PC-3 (cell line): ENCODE measurements at regions of chr2 and their contacts with region 1.

Region 1: DNA sequence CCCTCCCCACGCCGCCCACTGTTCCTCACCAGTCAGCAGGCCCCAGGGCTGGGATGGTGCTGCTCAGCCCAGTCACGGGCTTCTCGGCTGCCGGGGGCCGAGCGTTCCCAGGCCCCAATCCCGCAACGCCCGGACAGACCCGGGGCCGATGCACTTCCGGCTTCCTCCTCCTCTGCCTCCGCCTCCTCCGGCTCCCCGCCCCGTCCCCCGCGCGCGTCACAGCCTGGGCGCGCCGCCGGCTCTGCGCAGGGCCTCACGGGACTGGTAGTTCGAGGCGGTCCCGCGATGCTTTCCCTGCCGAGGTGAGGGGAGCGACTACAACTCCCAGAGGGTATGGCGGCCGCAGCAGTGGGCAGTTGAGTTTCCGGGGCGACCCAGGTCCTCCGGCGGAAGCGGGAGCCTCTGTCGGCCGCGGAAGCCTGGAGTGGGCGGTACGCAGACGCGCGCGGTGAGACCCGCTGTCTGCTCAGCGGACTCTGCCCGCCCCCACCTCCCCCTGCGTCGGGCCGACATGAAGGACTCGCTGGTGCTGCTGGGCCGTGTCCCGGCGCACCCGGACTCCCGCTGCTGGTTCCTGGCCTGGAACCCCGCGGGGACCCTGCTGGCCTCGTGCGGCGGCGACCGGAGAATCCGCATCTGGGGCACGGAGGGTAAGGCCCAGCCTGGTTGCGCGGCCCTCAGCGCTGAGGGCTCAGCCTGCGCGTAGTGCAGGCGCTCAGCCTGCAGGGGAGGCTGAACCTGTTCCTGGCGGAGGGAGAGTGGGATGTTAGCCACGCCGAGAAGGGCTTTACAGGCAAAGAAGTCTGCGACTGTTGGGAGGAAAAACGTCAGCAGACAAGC is at the starts of genes CIAO1 and TMEM127:
- DNase-seq: peak; percentile 98
- ATAC-seq: peak; percentile 94
- H3K4me3 ChIP-seq: peak within 1 kb of the TSS; percentile 100
- H3K27ac ChIP-seq: peak within 1 kb of the TSS; percentile 18
- H3K4me1 ChIP-seq: peaks cover 26% of the 10 kb centered on the region
- H3K27me3 ChIP-seq: no peaks in the 10 kb centered on the region
- CTCF ChIP-seq: peak; percentile 20; the same call in 1 of the 2 replicates
- total RNA-seq, gene CIAO1: 124 and 130 TPM in 2 replicates
- total RNA-seq, gene TMEM127: 31.9 and 33.9 TPM in 2 replicates

Region 2: GRCh38 chr2:95709831-95710230 is 556.2 kb before region 1 on chr2:
- CTCF ChIA-PET with region 1: no interaction called
- POLR2A ChIA-PET with region 1: no interaction called
- intact Hi-C with region 1: no loop called
- DNase-seq: no peak
- ATAC-seq: no peak
- H3K4me3 ChIP-seq: no peak overlapping the region
- H3K27ac ChIP-seq: no peak overlapping the region
- H3K4me1 ChIP-seq: no peaks in the 10 kb centered on the region
- H3K27me3 ChIP-seq: no peaks in the 10 kb centered on the region
- CTCF ChIP-seq: no peak

Region 3: DNA sequence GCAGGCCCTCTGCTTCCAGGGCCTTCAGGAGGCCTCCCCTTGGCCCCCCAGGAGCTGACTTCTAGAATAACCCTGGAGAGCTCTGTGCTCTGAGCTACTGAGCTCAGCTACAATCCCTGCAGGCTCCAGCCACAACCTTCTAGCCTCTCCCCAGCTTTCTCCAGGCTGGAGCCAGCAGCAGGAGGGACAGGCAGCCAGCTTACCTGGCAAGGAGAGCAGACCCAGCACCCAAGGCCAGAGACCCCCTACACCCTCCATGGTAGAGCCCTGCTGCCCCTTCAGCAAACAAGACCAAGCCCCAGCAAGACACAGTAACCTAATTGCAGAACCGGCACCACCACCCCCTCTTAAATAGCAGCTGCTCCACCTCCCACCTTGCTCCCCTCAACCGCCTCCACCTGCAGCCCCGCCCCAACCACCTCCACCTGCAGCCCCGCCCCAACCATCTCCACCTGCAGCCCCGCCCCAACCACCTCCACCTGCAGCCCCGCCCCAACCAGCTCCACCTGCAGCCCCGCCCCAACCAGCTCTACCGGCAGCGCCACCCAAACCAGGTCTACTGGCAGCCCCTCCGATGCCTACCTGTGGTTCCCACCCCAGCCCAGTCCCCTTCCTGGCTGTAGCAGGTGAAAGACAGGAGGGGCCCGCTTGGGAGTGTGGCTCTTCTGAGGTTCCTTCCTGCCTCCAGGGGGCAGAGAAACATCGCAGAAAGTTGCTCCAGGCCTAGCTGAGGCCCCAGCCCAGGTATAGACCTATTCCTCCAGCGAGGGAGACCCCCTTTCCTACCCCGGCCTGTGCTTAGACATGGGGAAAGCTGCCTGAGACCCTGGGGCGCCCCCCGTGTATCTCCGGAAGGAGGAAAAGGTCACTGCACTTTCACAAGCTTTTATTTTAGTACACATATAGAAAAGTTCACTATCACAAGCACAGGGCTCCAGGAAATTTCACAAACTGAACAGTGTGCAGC is 127.6 kb before region 1 on chr2 and contains the start of gene ASTL:
- CTCF ChIA-PET with region 1: no interaction called
- POLR2A ChIA-PET with region 1: no interaction called
- intact Hi-C with region 1: loop called (anchors 2 kb)
- DNase-seq: peak; percentile 64
- ATAC-seq: peak; percentile 86
- H3K4me3 ChIP-seq: no peak within 1 kb of the TSS; the same call in 1 of the 2 replicates
- H3K27ac ChIP-seq: no peak within 1 kb of the TSS
- H3K4me1 ChIP-seq: peaks cover 5% of the 10 kb centered on the region; the same call in 1 of the 2 replicates
- H3K27me3 ChIP-seq: no peaks in the 10 kb centered on the region
- CTCF ChIP-seq: peak; percentile 70
- total RNA-seq, gene ASTL: not detected in 2 replicates

Region 4: GRCh38 chr2:96180521-96180920 is 85.5 kb before region 1 on chr2:
- CTCF ChIA-PET with region 1: interaction called, 10 read pairs
- POLR2A ChIA-PET with region 1: no interaction called
- intact Hi-C with region 1: no loop called
- DNase-seq: no peak
- ATAC-seq: no peak
- H3K4me3 ChIP-seq: no peak overlapping the region
- H3K27ac ChIP-seq: no peak overlapping the region
- H3K4me1 ChIP-seq: no peaks in the 10 kb centered on the region
- H3K27me3 ChIP-seq: no peaks in the 10 kb centered on the region
- CTCF ChIP-seq: no peak

Region 5: DNA sequence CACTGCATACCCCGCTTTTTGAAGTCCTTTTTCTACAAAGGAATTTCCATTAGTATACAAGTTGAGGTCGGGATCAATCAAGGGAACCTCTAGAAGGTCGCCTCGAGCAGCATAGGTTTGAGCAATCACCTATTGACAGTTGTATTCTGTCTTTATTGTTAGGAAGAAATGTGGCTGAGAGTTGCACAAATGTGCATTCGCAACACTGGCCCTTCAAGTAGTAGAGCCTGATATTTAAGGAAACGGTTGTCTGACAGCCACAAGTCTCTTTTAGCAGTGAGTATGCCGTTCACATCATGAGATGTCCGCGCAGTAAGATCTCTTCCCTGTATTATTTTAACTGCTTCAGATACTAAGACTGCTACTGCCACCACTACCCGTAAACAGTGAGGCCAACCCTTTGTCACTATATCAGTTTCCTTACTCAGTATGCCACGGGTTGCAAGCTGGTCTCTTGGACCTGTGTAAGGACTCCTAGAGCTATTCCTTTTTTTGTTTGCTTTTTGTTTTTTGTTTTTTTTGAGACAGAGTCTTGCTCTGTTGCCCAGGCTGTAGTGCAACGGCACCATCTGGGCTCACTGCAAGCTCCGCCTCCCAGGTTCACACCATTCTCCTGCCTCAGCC is 47.4 kb before region 1 on chr2:
- CTCF ChIA-PET with region 1: interaction called, 17 read pairs
- POLR2A ChIA-PET with region 1: no interaction called
- intact Hi-C with region 1: no loop called
- DNase-seq: no peak
- ATAC-seq: no peak
- H3K4me3 ChIP-seq: no peak overlapping the region
- H3K27ac ChIP-seq: no peak overlapping the region
- H3K4me1 ChIP-seq: no peaks in the 10 kb centered on the region
- H3K27me3 ChIP-seq: no peaks in the 10 kb centered on the region
- CTCF ChIP-seq: no peak

Region 6: DNA sequence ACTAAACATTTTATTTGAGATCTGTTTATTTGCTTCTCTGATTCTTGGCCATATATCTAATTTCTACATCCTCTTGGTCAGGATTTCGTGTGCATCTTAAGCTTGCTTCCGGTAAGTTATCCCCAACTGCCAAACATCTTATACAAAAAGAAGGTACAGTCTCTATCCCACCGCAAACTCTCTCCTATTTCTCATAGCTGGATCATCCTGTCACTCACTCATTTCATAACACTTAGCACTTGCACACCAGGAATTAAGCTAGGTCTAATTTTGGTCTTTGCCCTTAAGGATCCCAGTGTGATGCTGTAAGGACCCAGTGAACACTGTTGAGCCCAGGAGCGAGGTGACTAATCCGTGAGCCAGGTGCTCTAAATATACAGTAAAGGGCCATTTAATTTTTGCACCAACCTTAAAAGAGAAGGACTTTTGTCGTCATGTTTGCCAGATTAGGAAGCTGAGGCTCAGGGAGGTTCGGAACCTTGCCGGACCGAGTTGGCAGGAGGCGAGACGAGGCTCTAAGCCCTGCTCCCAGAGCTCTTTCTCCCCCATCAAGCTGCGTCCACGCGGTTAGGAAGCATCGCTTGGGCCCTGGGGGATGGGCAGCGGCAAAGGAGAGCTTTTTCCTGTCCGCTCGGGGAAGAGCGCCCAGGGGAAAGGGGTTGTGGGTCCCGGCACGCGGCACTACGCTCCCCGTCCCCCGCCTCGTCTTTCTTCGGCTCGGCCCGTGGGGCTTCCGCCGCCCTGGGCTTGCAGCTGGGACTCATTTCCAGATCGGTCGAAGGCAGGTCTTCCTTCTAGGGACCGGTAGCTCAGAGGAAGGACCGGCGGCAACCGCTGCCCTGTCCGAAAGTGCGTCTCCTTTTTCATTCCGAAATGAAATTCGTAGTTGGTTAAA is 54.9 kb after region 1 on chr2:
- CTCF ChIA-PET with region 1: no interaction called
- POLR2A ChIA-PET with region 1: no interaction called
- intact Hi-C with region 1: no loop called
- DNase-seq: peak; percentile 44
- ATAC-seq: peak; percentile 59
- H3K4me3 ChIP-seq: peak overlapping the region; percentile 81
- H3K27ac ChIP-seq: no peak overlapping the region
- H3K4me1 ChIP-seq: peaks cover 22% of the 10 kb centered on the region
- H3K27me3 ChIP-seq: peaks cover 11% of the 10 kb centered on the region; the same call in 1 of the 2 replicates
- CTCF ChIP-seq: no peak